ENCODE measurements at regions of chr2 and their contacts with region 1.

Region 1: DNA sequence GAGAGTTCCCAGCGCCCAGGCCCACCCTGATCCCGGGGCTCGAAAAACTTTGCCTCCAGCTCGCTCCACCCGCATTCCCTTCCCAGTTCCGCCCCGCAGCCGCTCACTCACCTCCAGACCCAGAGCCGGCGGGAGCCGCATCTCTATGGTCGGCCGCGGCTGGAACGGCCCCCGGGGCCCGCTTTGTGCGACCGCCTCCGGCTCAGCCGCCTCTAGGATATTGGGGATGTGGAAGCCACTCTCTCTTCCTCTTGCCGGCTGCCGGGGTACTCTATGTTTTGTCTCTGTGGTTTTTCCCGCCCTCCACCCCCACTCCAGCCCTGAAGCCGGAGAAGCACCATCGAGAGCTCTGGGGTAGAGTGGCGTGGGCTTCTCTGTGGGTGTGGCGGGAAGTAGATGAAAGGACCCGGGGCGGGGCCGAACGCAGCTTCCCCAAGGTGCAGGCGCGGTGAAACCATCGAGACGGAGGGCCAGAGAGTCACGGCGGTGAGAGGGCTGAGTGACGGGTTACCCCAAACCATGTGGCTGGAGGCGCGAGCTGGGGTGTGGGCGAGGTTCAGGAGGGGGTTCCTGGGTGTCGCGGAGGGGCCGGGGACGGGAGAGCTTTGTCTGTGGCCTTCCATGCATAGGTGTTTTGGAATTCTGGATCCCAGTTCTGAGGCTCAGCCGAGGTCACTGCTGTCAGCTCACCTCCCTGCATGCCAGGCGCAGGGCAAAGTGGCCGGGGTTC is at the starts of genes BCS1L and ZNF142:
- DNase-seq: peak; percentile 75 to 95 (median 90)
- ATAC-seq: peak; percentile 99
- H3K4me3 ChIP-seq: peak within 1 kb of the TSS; percentile 83
- H3K4me3 Mint-ChIP-seq: peak within 1 kb of the TSS; percentile 90 to 99 (median 98)
- H3K27ac ChIP-seq: peak within 1 kb of the TSS; percentile 80
- H3K27ac Mint-ChIP-seq: peak within 1 kb of the TSS; percentile 74 to 96 (median 93)
- H3K4me1 ChIP-seq: peaks cover 7 to 15% of the 10 kb centered on the region in 2 donors
- H3K4me1 Mint-ChIP-seq: peaks cover 25 to 45% (median 38%) of the 10 kb centered on the region in 7 donors
- H3K27me3 ChIP-seq: no peaks in the 10 kb centered on the region
- H3K27me3 Mint-ChIP-seq: no peaks in the 10 kb centered on the region
- total RNA-seq, gene BCS1L: 21.4 to 62.0 (median 49.0) TPM
- total RNA-seq, gene ZNF142: 38.7 to 49.8 (median 40.8) TPM

Region 2: GRCh38 chr2:218292048-218293014 is 367.1 kb before region 1 on chr2 and contains the start of gene TMBIM1:
- CTCF ChIA-PET with region 1: no interaction called
- POLR2A ChIA-PET with region 1: no interaction called
- intact Hi-C with region 1: loop called (anchors 2 kb)
- DNase-seq: peak; percentile 72 to 90 (median 83)
- ATAC-seq: peak; percentile 96
- H3K4me3 ChIP-seq: peak within 1 kb of the TSS; percentile 53
- H3K4me3 Mint-ChIP-seq: peak within 1 kb of the TSS; percentile 82 to 96 (median 92)
- H3K27ac ChIP-seq: peak within 1 kb of the TSS; percentile 93
- H3K27ac Mint-ChIP-seq: peak within 1 kb of the TSS; percentile 88 to 99 (median 98)
- H3K4me1 ChIP-seq: peaks cover 42 to 47% of the 10 kb centered on the region in 2 donors
- H3K4me1 Mint-ChIP-seq: peaks cover 32 to 61% (median 53%) of the 10 kb centered on the region in 7 donors
- H3K27me3 ChIP-seq: no peaks in the 10 kb centered on the region
- H3K27me3 Mint-ChIP-seq: peaks cover 0 to 2% (median 0%) of the 10 kb centered on the region in 5 donors
- total RNA-seq, gene TMBIM1: 51.7 to 112 (median 83.8) TPM

Region 3: GRCh38 chr2:218518876-218519275 is 140.5 kb before region 1 on chr2:
- CTCF ChIA-PET with region 1: no interaction called
- POLR2A ChIA-PET with region 1: no interaction called
- intact Hi-C with region 1: no loop called
- DNase-seq: no peak
- ATAC-seq: no peak
- H3K4me3 ChIP-seq: no peak overlapping the region
- H3K4me3 Mint-ChIP-seq: no peak overlapping the region
- H3K27ac ChIP-seq: no peak overlapping the region
- H3K27ac Mint-ChIP-seq: peak overlapping the region in 1 of 9 donors; percentile 6
- H3K4me1 ChIP-seq: no peaks in the 10 kb centered on the region
- H3K4me1 Mint-ChIP-seq: peaks cover 0 to 42% (median 13%) of the 10 kb centered on the region in 7 donors
- H3K27me3 ChIP-seq: no peaks in the 10 kb centered on the region
- H3K27me3 Mint-ChIP-seq: no peaks in the 10 kb centered on the region

Region 4: GRCh38 chr2:218691234-218691633 is 31.8 kb after region 1 on chr2:
- CTCF ChIA-PET with region 1: interaction called, 6 read pairs
- POLR2A ChIA-PET with region 1: interaction called, 3 read pairs
- intact Hi-C with region 1: loop called in 1 of 2 experiments (anchors 1 kb)
- DNase-seq: no peak
- ATAC-seq: no peak
- H3K4me3 ChIP-seq: no peak overlapping the region
- H3K4me3 Mint-ChIP-seq: no peak overlapping the region
- H3K27ac ChIP-seq: no peak overlapping the region
- H3K27ac Mint-ChIP-seq: no peak overlapping the region
- H3K4me1 ChIP-seq: no peaks in the 10 kb centered on the region
- H3K4me1 Mint-ChIP-seq: peaks cover 2 to 5% (median 4%) of the 10 kb centered on the region in 7 donors
- H3K27me3 ChIP-seq: no peaks in the 10 kb centered on the region
- H3K27me3 Mint-ChIP-seq: no peaks in the 10 kb centered on the region

Region 5: GRCh38 chr2:218898109-218898878 is 238.9 kb after region 1 on chr2:
- CTCF ChIA-PET with region 1: interaction called, 3 read pairs
- POLR2A ChIA-PET with region 1: no interaction called
- intact Hi-C with region 1: loop called (anchors 2 to 5 kb)
- DNase-seq: peak; percentile 50 to 88 (median 72)
- ATAC-seq: peak; percentile 42
- H3K4me3 ChIP-seq: peak overlapping the region; percentile 65
- H3K4me3 Mint-ChIP-seq: peak overlapping the region; percentile 53 to 87 (median 82)
- H3K27ac ChIP-seq: no peak overlapping the region
- H3K27ac Mint-ChIP-seq: peak overlapping the region in 7 of 9 donors; percentile 33 to 92 (median 71)
- H3K4me1 ChIP-seq: peaks cover 40 to 49% of the 10 kb centered on the region in 2 donors
- H3K4me1 Mint-ChIP-seq: peaks cover 38 to 48% (median 42%) of the 10 kb centered on the region in 7 donors
- H3K27me3 ChIP-seq: peaks cover 0 to 3% of the 10 kb centered on the region in 2 donors
- H3K27me3 Mint-ChIP-seq: peaks cover 20 to 75% (median 40%) of the 10 kb centered on the region in 5 donors